ENCODE measurements at regions of chr18 and their contacts with region 1.

Region 1: GRCh38 chr18:79378542-79379250 is 17.0 kb upstream of the NFATC1 start:
- H3K4me3 Mint-ChIP-seq: no peak overlapping the region
- H3K27ac Mint-ChIP-seq: no peak overlapping the region
- H3K4me1 Mint-ChIP-seq: peaks cover under 1% of the 10 kb centered on the region
- H3K27me3 Mint-ChIP-seq: peaks cover 4% of the 10 kb centered on the region

Region 2: DNA sequence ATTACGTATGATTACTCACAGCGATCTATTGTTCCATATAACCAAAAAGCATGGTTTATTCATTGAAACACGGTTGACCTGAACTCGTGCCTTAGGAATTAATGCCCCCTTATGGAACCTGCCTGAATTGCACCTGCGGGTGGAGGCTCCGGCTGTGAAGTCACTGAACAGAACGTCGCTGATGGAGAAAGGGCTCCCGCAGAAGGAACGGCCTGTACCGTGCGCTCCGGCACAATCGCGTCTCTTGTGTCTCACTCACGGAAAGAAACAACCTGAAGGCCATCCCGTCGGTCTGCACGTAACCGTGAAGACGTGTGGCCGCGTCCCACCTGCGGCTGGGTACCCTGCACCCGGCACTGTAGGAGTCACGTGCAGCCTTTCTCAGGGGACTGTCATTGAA is 150.2 kb after region 1 on chr18:
- intact Hi-C with region 1: loop called (anchors 1 kb)
- H3K4me3 Mint-ChIP-seq: no peak overlapping the region
- H3K27ac Mint-ChIP-seq: no peak overlapping the region
- H3K4me1 Mint-ChIP-seq: peaks cover 22% of the 10 kb centered on the region
- H3K27me3 Mint-ChIP-seq: peaks cover 14% of the 10 kb centered on the region

Region 3: DNA sequence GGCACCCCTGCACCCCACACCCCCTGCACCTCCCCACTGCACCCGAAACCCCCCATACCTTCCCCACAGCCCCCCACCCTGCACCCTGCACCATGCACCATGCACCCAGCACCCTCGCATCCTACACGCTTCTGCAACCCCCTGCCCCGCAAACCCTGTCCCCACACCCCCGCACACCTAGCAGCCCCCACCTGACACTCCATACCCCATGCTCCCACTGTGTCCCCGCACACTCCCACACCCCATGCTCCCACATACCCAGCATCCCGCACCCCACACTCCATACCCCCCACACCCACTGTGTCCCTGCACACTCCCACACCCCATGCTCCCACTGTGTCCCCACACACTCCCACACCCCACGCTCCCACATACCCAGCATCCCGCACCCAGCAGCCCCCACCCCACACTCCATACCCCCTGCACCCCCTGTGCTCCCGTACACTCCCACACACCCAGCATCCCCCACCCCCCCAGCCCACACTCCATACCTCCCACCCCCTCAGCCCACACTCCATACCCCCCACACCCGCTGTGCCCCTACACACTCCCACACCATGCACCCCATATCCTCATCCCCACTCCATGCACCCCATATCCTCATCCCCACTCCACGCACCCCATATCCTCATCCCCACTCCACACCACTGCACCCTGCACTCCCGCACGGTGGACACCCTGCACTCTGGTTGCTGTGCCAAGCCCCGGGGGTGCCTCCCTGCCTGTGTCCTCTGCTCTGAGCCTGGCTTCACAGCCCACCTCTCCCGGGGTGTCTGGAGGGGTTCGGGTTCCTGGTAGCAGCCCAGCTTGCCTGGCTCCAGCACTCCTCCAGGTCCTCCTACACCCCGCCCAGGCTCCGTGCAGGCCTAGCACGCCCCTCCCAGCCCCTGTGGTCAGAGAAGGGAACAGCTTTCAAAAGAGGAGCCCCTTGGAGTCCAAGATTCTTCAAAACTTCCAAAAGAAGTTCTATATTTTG is 207.0 kb after region 1 on chr18:
- intact Hi-C with region 1: no loop called
- H3K4me3 Mint-ChIP-seq: no peak overlapping the region
- H3K27ac Mint-ChIP-seq: peak overlapping the region; percentile 3
- H3K4me1 Mint-ChIP-seq: peaks cover 7% of the 10 kb centered on the region
- H3K27me3 Mint-ChIP-seq: peaks cover 13% of the 10 kb centered on the region

Region 4: DNA sequence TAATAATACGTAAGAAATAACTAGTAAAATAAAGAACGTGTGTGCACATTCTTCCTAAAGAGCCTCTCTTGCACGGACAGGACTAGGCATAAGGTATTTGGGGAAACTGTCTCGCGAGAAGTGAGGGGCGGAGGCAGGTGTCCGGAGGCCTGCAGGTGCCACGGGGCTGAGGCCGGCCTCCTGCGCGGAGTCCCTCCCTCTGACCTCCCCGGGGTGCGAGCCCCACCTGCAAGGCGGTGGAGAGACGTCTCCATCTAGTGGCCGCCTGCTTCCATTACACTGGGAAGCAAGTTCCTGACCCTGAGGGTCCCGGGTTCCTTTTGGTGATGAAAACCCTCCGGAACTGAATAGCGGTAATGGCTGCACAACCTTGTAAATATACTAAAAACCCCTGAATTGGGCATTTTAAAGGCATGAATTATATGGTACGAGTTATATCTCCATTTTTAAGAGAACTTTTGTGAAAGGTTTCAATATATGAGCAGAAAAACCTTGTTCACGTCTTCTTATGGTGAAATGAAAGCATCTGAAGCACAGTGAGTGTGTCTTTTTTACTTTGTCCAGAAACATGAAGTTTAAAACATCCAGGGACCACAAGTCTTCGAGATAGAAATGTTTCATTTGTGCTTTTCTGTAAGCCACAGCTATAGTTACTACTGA is 265.4 kb after region 1 on chr18:
- intact Hi-C with region 1: loop called (anchors 1 kb)
- H3K4me3 Mint-ChIP-seq: no peak overlapping the region
- H3K27ac Mint-ChIP-seq: peak overlapping the region; percentile 85
- H3K4me1 Mint-ChIP-seq: peaks cover 33% of the 10 kb centered on the region
- H3K27me3 Mint-ChIP-seq: peaks cover 10% of the 10 kb centered on the region

Region 5: DNA sequence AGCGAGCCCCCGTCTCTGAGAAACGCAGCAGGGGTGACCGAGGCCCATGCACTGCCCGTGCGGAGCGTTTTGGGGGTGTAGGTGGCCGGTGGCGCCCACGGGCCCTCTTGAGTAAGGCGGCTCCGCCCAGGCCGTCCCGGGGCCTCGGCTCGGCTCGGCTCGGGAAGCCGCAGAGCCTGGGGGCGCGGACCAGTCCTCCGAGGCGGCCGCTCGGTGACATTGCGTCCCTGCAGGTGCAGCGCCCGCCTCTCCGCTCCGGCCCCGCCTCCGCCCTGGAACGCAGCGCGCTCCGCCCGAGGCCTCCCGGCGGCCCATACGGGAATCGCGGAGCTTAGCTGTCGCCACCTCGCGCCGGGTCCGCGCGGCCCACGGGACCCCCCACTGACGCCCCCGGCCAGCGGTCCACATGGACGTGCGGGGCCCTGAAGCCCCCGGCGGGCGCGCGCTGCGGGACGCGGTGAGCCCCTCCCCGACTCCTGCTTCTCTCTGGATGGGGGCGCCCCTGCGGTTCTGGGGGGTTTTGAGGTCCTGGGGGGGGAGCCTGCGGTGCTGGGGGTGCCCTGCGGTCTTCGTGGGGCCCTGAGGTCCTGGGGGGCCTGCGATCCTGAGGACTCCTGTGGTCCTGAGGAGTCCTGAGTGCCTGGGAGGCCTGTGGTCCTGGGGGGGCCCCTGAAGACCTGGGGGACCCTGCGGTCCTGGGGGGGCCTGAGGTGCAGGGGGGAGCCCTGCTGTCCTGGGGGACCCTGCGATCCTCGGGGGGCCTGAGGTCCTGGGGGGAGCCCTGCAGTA is 585.8 kb after region 1 on chr18 and contains the start of gene HSBP1L1:
- intact Hi-C with region 1: loop called (anchors 10 kb)
- H3K4me3 Mint-ChIP-seq: peak within 1 kb of the TSS; percentile 80
- H3K27ac Mint-ChIP-seq: peak within 1 kb of the TSS; percentile 79
- H3K4me1 Mint-ChIP-seq: peaks cover 46% of the 10 kb centered on the region
- H3K27me3 Mint-ChIP-seq: peaks cover 20% of the 10 kb centered on the region

Region 6: GRCh38 chr18:80157708-80158343 is 779.1 kb after region 1 on chr18:
- intact Hi-C with region 1: loop called (anchors 5 kb)
- H3K4me3 Mint-ChIP-seq: no peak overlapping the region
- H3K27ac Mint-ChIP-seq: no peak overlapping the region
- H3K4me1 Mint-ChIP-seq: no peaks in the 10 kb centered on the region
- H3K27me3 Mint-ChIP-seq: peaks cover 24% of the 10 kb centered on the region

Measured in dendritic cell treated with granulocyte-macrophage colony-stimulating factor and Interleukin-4, amounts not matched to agents 40 ng/mL and 50 ng/mL, for 4 days (primary cell).